Naive thymus-derived CD4-positive, alpha-beta T cell (primary cell): ENCODE measurements at regions of chr1 and their contacts with region 1.

Region 1: GRCh38 chr1:185044981-185045813 is at the start of gene RNF2:
- DNase-seq: peak; percentile 64 to 80 (median 77)
- ATAC-seq: peak; percentile 95
- H3K4me3 ChIP-seq: peak within 1 kb of the TSS; percentile 74
- H3K4me3 Mint-ChIP-seq: peak within 1 kb of the TSS; percentile 87 to 96 (median 92)
- H3K27ac ChIP-seq: peak within 1 kb of the TSS; percentile 75
- H3K27ac Mint-ChIP-seq: peak within 1 kb of the TSS; percentile 69 to 96 (median 88)
- H3K4me1 ChIP-seq: peaks cover 11 to 15% of the 10 kb centered on the region in 2 donors
- H3K4me1 Mint-ChIP-seq: peaks cover 27 to 56% (median 45%) of the 10 kb centered on the region in 7 donors
- H3K27me3 ChIP-seq: no peaks in the 10 kb centered on the region
- H3K27me3 Mint-ChIP-seq: peaks cover 0 to 26% (median 0%) of the 10 kb centered on the region in 5 donors
- total RNA-seq, gene RNF2: 14.9 to 27.7 (median 19.6) TPM

Region 2: DNA sequence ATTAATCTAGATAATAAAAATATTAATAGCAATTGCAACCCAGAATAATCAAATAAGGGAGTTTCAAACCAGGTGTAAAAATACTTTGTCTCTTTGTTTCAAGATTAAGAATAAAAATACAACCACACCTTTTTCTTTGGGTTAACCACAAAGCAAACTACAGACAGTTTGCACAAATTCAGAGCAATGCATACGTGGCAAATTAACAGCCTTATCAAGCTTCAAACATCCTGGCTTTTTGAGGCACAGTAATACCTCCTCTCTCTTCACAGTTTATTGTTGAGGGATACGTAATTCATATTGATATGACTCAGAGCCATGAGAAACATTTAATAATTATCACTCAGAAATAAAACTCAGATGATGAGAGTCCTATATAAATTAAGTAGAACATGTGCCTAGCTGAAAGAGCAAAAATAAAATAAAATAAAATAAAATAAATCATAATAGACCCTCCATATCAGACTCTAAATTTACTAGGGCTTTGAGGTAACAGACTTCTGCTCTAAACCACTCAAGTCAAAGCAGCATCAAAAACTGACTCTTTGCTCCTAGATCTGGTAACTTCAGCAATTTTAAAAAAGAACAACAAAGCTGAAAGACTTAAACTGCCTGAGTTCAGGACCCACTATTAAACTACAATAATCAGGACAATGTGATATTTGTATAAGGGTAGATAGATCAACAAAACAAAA is 302.0 kb before region 1 on chr1:
- CTCF ChIA-PET with region 1: no interaction called
- POLR2A ChIA-PET with region 1: no interaction called
- intact Hi-C with region 1: loop called in 1 of 2 experiments (anchors 5 kb)
- DNase-seq: peak in 7 of 9 donors; percentile 68 to 85 (median 79)
- ATAC-seq: peak; percentile 95
- H3K4me3 ChIP-seq: no peak overlapping the region
- H3K4me3 Mint-ChIP-seq: peak overlapping the region; percentile 48 to 86 (median 74)
- H3K27ac ChIP-seq: peak overlapping the region; percentile 55
- H3K27ac Mint-ChIP-seq: peak overlapping the region; percentile 82 to 99 (median 93)
- H3K4me1 ChIP-seq: peaks cover 33 to 37% of the 10 kb centered on the region in 2 donors
- H3K4me1 Mint-ChIP-seq: peaks cover 34 to 82% (median 70%) of the 10 kb centered on the region in 7 donors
- H3K27me3 ChIP-seq: no peaks in the 10 kb centered on the region
- H3K27me3 Mint-ChIP-seq: no peaks in the 10 kb centered on the region

Region 3: GRCh38 chr1:185066181-185066580 is 21.0 kb after region 1 on chr1:
- CTCF ChIA-PET with region 1: interaction called, 4 read pairs
- POLR2A ChIA-PET with region 1: interaction called, 5 read pairs
- intact Hi-C with region 1: loop called in 1 of 2 experiments (anchors 2 kb)
- DNase-seq: no peak
- ATAC-seq: no peak
- H3K4me3 ChIP-seq: no peak overlapping the region
- H3K4me3 Mint-ChIP-seq: peak overlapping the region in 1 of 10 donors; percentile 3
- H3K27ac ChIP-seq: no peak overlapping the region
- H3K27ac Mint-ChIP-seq: peak overlapping the region in 2 of 9 donors; percentile 25 to 40
- H3K4me1 ChIP-seq: peaks cover 0 to 9% of the 10 kb centered on the region in 2 donors
- H3K4me1 Mint-ChIP-seq: peaks cover 6 to 81% (median 69%) of the 10 kb centered on the region in 7 donors
- H3K27me3 ChIP-seq: no peaks in the 10 kb centered on the region
- H3K27me3 Mint-ChIP-seq: no peaks in the 10 kb centered on the region

Region 4: GRCh38 chr1:185566995-185567394 is 521.8 kb after region 1 on chr1:
- CTCF ChIA-PET with region 1: no interaction called
- POLR2A ChIA-PET with region 1: no interaction called
- intact Hi-C with region 1: loop called in 1 of 2 experiments (anchors 2 kb)
- DNase-seq: peak in 7 of 9 donors; percentile 85 to 94 (median 91)
- ATAC-seq: peak; percentile 92
- H3K4me3 ChIP-seq: no peak overlapping the region
- H3K4me3 Mint-ChIP-seq: peak overlapping the region; percentile 46 to 87 (median 78)
- H3K27ac ChIP-seq: peak overlapping the region; percentile 89
- H3K27ac Mint-ChIP-seq: peak overlapping the region; percentile 96 to 100 (median 98)
- H3K4me1 ChIP-seq: peaks cover 37 to 56% of the 10 kb centered on the region in 2 donors
- H3K4me1 Mint-ChIP-seq: peaks cover 47 to 91% (median 86%) of the 10 kb centered on the region in 7 donors
- H3K27me3 ChIP-seq: no peaks in the 10 kb centered on the region
- H3K27me3 Mint-ChIP-seq: no peaks in the 10 kb centered on the region

Region 5: DNA sequence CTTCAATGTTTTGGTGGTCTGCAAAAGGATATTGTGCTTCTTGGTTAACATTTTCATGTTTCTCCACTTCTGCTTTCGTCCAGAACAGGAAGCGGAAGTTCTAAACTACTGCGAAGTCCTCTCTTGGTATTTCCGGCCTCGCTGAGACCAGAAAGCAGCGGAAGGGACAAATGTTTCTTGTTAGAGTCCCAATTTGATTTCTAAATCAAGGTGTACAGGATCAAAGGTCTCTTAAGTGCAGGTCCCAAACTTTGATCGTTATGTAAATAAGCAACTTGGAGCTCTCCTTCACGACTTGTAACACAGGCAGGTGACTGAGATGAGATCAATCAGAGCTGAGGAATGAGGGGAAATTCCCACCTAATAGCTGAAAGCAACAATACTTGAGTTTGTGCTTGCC is 648.9 kb after region 1 on chr1:
- CTCF ChIA-PET with region 1: no interaction called
- POLR2A ChIA-PET with region 1: interaction called, 3 read pairs
- intact Hi-C with region 1: loop called in 1 of 2 experiments (anchors 5 kb)
- DNase-seq: peak in 4 of 9 donors; percentile 20 to 26 (median 22)
- ATAC-seq: peak; percentile 60
- H3K4me3 ChIP-seq: peak overlapping the region; percentile 31
- H3K4me3 Mint-ChIP-seq: peak overlapping the region; percentile 73 to 85 (median 78)
- H3K27ac ChIP-seq: peak overlapping the region; percentile 50
- H3K27ac Mint-ChIP-seq: peak overlapping the region; percentile 77 to 96 (median 88)
- H3K4me1 ChIP-seq: peaks cover 0 to 17% of the 10 kb centered on the region in 2 donors
- H3K4me1 Mint-ChIP-seq: peaks cover 11 to 27% (median 14%) of the 10 kb centered on the region in 7 donors
- H3K27me3 ChIP-seq: no peaks in the 10 kb centered on the region
- H3K27me3 Mint-ChIP-seq: peaks cover 0 to 27% (median 9%) of the 10 kb centered on the region in 5 donors